ENCODE measurements at regions of chr6 and their contacts with region 1.

Region 1: GRCh38 chr6:2952557-2953095 is 18.7 kb downstream of the SERPINB6 start:
- DNase-seq: peak; percentile 65
- H3K4me3 ChIP-seq: peak overlapping the region; percentile 4
- CTCF ChIP-seq: peak; percentile 73

Region 2: DNA sequence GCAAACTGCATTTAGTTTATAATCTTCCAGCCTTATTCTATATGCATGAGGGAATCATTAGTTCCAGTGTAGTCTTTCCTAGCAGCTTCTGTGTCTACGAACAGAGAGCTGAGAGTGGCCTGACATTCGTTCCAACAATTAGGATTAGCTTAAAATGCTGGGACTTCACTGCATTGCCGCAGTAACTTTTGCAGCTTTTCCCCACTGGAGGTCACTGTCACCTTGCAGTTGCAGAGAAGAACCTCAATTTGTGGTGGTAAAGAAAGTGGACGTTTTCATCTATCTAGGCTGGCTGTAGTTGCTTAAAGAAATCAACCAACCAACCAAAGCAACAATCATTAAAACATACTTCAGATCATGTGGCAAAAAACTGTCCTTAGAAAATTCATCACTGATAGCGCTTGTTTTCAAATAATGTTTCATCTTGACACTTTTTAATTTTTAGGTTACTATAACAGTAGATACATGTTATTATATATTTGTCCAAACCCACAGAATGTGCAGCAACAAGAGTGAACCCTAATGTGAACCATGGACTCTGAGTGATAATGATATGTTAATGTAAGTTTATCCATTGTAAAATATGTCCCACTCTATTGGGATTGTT is 214.2 kb before region 1 on chr6:
- CTCF ChIA-PET with region 1: interaction called, 19 read pairs
- POLR2A ChIA-PET with region 1: no interaction called
- DNase-seq: no peak
- H3K4me3 ChIP-seq: no peak overlapping the region
- CTCF ChIP-seq: peak; percentile 62

Region 3: DNA sequence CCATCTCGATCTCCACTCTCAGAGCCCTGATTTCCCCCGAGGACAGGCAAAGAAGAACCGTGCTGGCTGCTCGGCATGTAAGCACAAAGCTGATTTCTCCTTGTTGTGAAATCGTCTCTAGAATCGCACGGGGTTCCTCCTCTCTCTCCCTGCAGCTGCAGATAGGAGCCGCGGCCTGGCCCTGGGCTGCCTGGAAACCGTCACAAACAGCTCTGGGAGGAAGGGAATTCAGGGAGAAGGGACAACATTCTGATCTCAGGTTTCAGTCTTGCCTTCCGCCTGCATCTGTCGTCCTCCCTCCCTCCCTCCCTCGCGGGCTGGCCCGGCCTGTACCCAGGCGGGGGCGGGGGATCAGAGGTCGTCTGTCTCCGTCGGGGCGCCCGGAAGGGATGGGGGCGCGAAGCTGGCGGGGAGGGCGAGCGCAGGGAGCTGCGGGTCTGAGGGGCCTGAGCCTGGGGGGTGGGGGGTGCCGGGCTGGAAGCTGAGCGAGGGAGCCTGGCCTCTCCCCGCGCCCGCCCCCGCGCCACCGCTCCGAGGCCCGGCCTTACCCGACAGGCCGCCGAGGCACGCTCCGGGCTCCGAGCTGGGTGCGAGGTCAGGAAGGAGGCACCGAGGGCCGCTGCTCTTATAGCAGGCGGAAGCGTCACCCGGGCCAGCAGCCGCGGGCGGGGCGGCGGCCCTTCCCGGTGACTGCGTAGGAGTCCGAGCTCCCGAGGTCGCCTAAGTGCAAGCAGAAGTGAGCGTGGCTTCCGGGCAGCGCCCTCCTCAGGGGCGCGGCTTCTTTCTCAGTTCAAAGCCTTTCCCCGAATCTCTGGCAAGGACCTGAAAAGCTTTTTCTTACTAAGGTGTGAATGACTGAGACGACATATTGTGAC is 111.1 kb before region 1 on chr6 and contains the start of gene SERPINB1:
- CTCF ChIA-PET with region 1: interaction called, 37 read pairs
- POLR2A ChIA-PET with region 1: no interaction called
- DNase-seq: peak; percentile 72
- H3K4me3 ChIP-seq: peak within 1 kb of the TSS; percentile 55
- CTCF ChIP-seq: no peak

Region 4: GRCh38 chr6:2917065-2917464 is 35.6 kb before region 1 on chr6:
- CTCF ChIA-PET with region 1: interaction called, 13 read pairs
- POLR2A ChIA-PET with region 1: no interaction called
- DNase-seq: no peak
- H3K4me3 ChIP-seq: no peak overlapping the region
- CTCF ChIP-seq: no peak

Region 5: GRCh38 chr6:2971420-2972218 is 19.0 kb after region 1 on chr6 and contains the start of gene SERPINB6:
- CTCF ChIA-PET with region 1: interaction called, 61 read pairs
- POLR2A ChIA-PET with region 1: interaction called, 3 read pairs
- DNase-seq: no peak
- H3K4me3 ChIP-seq: peak within 1 kb of the TSS; percentile 65
- CTCF ChIP-seq: no peak

Region 6: GRCh38 chr6:2988426-2989331 is 36.1 kb after region 1 on chr6:
- CTCF ChIA-PET with region 1: interaction called, 210 read pairs
- POLR2A ChIA-PET with region 1: interaction called, 8 read pairs
- DNase-seq: peak; percentile 62
- H3K4me3 ChIP-seq: peak overlapping the region; percentile 71
- CTCF ChIP-seq: peak; percentile 84